Naive thymus-derived CD4-positive, alpha-beta T cell (primary cell): ENCODE measurements at regions of chr11 and their contacts with region 1.

Region 1: DNA sequence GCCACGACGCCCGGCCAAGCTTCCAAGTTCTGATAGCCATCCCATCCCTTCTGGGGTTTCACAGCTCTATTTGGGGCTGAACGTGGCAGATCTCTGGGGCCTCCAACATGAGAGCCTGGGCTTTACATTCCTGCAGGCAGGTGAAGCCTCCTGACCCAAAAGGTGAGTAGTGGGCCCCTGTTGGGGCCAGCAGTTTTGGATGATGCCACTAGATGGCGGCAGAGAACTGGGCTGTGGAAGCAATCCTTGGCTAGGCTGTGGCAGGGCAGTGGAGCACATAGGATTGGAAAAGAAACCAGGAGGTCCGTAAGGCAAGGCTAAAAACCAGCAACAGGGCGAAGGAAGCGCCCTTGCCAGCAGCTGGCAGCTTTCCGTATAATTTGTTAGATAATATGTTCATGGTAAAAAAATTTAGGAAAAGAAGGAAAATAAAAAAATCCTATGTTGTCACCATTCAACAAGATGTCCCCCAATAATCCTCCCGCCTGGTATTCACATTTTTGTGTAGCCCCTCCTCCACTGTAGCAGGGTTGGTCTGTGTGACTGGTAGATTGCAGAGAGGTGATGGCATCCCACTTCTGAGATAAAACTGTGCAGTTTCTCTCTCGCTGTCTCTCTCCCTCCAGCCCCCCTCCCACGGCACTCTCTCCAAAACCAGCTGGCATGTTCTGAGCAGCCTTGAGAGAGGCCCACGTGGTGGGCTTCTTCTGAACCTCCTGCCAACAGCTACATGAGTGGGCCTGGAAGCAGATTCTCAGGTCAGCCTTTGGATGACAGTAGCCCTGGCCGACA is 43.6 kb upstream of the OR4B1 start:
- DNase-seq: peak; percentile 27 to 68 (median 49)
- ATAC-seq: peak; percentile 80
- H3K4me3 ChIP-seq: no peak overlapping the region
- H3K4me3 Mint-ChIP-seq: peak overlapping the region in 1 of 10 donors; percentile 35
- H3K27ac ChIP-seq: no peak overlapping the region
- H3K27ac Mint-ChIP-seq: peak overlapping the region in 4 of 9 donors; percentile 26 to 63 (median 46)
- H3K4me1 ChIP-seq: peaks cover 0 to 4% of the 10 kb centered on the region in 2 donors
- H3K4me1 Mint-ChIP-seq: peaks cover 23 to 43% (median 35%) of the 10 kb centered on the region in 7 donors
- H3K27me3 ChIP-seq: no peaks in the 10 kb centered on the region
- H3K27me3 Mint-ChIP-seq: no peaks in the 10 kb centered on the region

Region 2: DNA sequence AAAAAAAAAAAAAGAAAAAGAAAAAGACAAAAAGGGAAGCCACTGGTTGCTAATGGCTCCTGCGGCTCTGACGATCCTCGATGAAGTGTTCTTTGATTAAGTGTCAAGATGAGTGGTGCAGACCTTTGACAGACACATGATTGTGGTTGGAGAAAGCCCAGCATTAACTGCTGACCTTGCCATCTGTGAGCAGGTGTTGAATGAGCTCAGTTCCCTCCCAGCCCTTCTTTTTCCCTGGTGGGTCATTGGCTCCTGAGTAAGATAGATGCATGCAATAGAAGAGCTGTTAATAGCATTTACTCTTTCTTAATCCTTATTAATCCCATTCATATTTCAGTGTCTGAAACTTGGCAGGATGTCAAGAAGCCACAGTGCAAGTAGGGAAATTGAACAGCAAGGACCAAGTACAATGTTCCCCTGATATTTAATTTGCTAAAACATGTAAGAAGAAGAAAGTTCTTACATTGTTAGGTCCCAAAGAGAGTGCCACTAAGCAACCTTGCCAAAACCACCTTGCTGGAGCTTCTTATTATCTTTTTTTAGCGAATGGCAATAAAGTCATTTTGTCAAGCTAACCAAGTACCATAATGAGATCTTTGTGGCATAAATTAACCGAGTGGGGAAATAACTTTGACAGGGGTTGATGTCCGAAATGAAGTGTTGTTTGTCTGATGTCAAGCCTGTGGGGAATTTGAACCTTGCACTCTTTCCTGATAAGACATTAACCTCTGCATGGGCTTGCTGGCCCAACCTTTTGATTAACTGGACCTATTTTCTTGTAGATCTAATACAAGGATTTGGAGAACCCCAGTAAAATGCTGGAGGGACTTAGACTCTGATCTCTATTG is 79.0 kb before region 1 on chr11:
- CTCF ChIA-PET with region 1: no interaction called
- POLR2A ChIA-PET with region 1: no interaction called
- intact Hi-C with region 1: no loop called
- DNase-seq: no peak
- ATAC-seq: no peak
- H3K4me3 ChIP-seq: no peak overlapping the region
- H3K4me3 Mint-ChIP-seq: no peak overlapping the region
- H3K27ac ChIP-seq: no peak overlapping the region
- H3K27ac Mint-ChIP-seq: peak overlapping the region in 4 of 9 donors; percentile 6 to 40 (median 34)
- H3K4me1 ChIP-seq: peaks cover 11 to 20% of the 10 kb centered on the region in 2 donors
- H3K4me1 Mint-ChIP-seq: peaks cover 30 to 78% (median 67%) of the 10 kb centered on the region in 7 donors
- H3K27me3 ChIP-seq: no peaks in the 10 kb centered on the region
- H3K27me3 Mint-ChIP-seq: no peaks in the 10 kb centered on the region

Region 3: DNA sequence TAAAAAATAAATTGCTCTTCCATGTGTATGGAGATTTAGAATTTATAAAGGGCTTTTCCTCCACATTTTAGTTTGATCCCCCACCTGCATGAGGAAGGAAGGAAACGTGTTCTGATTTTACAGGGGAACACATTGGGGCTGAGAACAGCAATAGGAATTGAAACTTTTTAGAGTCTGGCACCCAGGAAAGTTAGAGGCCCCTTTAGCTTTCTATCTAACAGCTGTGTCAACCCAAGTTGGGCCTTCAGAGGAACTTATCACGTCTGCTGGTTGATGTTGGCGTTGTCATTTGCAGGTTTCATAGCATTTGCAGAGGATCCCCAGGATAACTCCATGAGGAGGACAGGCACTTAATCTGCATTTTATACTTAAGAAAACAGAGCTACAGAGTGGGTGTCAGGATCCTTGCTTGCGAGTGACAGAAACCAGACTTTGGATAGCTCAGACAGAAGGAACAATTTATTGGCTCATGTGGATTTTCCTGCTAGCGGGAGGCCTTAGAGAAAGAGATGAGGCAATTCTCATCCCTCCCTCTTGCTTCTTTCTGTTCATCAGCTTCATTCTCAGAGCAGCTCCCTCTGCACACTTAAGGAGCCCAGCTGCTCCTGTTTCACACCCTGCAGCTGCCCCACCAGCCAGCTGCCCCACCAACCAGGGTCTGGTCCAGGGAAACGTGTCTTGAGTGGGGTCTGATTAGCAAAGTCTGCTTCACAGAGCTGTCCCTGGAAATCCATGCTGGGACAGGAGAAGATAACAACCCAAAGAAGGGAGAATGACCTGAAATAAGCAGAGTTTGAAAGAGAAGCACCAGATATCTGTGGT is 48.9 kb before region 1 on chr11:
- CTCF ChIA-PET with region 1: no interaction called
- POLR2A ChIA-PET with region 1: no interaction called
- intact Hi-C with region 1: no loop called
- DNase-seq: no peak
- ATAC-seq: no peak
- H3K4me3 ChIP-seq: no peak overlapping the region
- H3K4me3 Mint-ChIP-seq: no peak overlapping the region
- H3K27ac ChIP-seq: no peak overlapping the region
- H3K27ac Mint-ChIP-seq: peak overlapping the region in 2 of 9 donors; percentile 9 to 59
- H3K4me1 ChIP-seq: no peaks in the 10 kb centered on the region
- H3K4me1 Mint-ChIP-seq: peaks cover 0 to 21% (median 0%) of the 10 kb centered on the region in 7 donors
- H3K27me3 ChIP-seq: no peaks in the 10 kb centered on the region
- H3K27me3 Mint-ChIP-seq: no peaks in the 10 kb centered on the region

Region 4: GRCh38 chr11:48141475-48142122 is 31.4 kb before region 1 on chr11:
- CTCF ChIA-PET with region 1: no interaction called
- POLR2A ChIA-PET with region 1: no interaction called
- intact Hi-C with region 1: no loop called
- DNase-seq: peak in 2 of 9 donors; percentile 12 to 18
- ATAC-seq: peak; percentile 47
- H3K4me3 ChIP-seq: no peak overlapping the region
- H3K4me3 Mint-ChIP-seq: no peak overlapping the region
- H3K27ac ChIP-seq: no peak overlapping the region
- H3K27ac Mint-ChIP-seq: peak overlapping the region in 7 of 9 donors; percentile 35 to 72 (median 43)
- H3K4me1 ChIP-seq: no peaks in the 10 kb centered on the region
- H3K4me1 Mint-ChIP-seq: peaks cover 6 to 18% (median 10%) of the 10 kb centered on the region in 7 donors
- H3K27me3 ChIP-seq: no peaks in the 10 kb centered on the region
- H3K27me3 Mint-ChIP-seq: no peaks in the 10 kb centered on the region

Region 5: DNA sequence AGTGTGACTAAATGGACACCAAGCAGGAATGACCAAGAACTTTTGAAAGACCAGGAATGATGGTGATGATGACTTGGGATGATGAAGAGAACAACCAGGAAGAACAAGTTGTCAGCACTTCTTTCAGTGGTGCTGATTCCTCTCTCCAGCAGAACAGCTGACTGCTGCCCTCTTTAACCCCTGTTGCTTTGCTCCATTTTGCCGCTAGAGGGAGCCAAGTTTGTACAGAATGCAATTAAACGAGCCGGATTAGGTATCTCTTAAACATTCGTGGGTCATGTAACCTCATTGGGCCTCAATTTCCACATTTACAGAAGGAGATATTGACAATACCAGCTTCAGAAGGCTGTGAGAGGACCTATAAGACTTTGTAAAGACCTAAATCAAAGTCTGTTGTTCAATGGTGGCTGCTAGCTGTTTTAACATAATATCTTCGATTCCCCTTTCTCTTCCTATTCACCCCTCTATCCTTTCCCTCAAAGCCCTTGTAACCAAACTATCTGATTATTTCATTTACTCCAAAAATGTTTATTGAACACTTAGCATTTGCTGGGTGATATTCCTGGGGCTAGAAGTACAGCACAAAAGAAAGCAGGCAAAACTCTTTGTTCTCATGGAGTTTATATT is 134.9 kb after region 1 on chr11:
- CTCF ChIA-PET with region 1: interaction called, 3 read pairs
- POLR2A ChIA-PET with region 1: no interaction called
- intact Hi-C with region 1: loop called (anchors 1 to 2 kb)
- DNase-seq: peak in 8 of 9 donors; percentile 11 to 62 (median 52)
- ATAC-seq: peak; percentile 62
- H3K4me3 ChIP-seq: no peak overlapping the region
- H3K4me3 Mint-ChIP-seq: no peak overlapping the region
- H3K27ac ChIP-seq: no peak overlapping the region
- H3K27ac Mint-ChIP-seq: no peak overlapping the region
- H3K4me1 ChIP-seq: no peaks in the 10 kb centered on the region
- H3K4me1 Mint-ChIP-seq: peaks cover 0 to 9% (median 0%) of the 10 kb centered on the region in 7 donors
- H3K27me3 ChIP-seq: no peaks in the 10 kb centered on the region
- H3K27me3 Mint-ChIP-seq: peaks cover 2 to 22% (median 10%) of the 10 kb centered on the region in 5 donors

Region 6: DNA sequence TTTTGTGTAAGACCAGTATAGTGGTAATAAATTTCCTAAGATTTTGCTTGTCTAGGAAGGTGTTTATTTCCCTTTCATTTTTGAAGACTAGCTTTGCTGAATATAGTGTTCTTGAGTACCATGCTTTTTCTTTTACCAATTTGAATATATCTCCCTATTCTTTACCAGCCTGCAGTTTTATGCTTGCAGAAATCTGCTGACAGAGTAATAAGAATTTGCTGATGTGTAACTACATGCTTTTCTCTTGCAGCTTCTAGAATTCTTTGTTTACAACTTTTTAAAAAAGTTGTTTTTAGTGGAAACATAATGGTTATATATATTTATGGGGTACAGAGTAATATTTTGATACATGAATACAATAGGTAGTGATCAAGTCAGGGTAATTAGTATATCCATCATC is 1360.2 kb after region 1 on chr11:
- CTCF ChIA-PET with region 1: no interaction called
- POLR2A ChIA-PET with region 1: no interaction called
- intact Hi-C with region 1: loop called (anchors 5 kb)
- DNase-seq: no peak
- ATAC-seq: no peak
- H3K4me3 ChIP-seq: no peak overlapping the region
- H3K4me3 Mint-ChIP-seq: no peak overlapping the region
- H3K27ac ChIP-seq: no peak overlapping the region
- H3K27ac Mint-ChIP-seq: no peak overlapping the region
- H3K4me1 ChIP-seq: no peaks in the 10 kb centered on the region
- H3K4me1 Mint-ChIP-seq: no peaks in the 10 kb centered on the region
- H3K27me3 ChIP-seq: no peaks in the 10 kb centered on the region
- H3K27me3 Mint-ChIP-seq: no peaks in the 10 kb centered on the region

Region 7: GRCh38 chr11:49995565-49995964 is 1822.6 kb after region 1 on chr11:
- CTCF ChIA-PET with region 1: no interaction called
- POLR2A ChIA-PET with region 1: no interaction called
- intact Hi-C with region 1: loop called in 1 of 2 experiments (anchors 10 kb)
- DNase-seq: peak in 3 of 9 donors; percentile 0 to 1 (median 1)
- ATAC-seq: no peak
- H3K4me3 ChIP-seq: no peak overlapping the region
- H3K4me3 Mint-ChIP-seq: no peak overlapping the region
- H3K27ac ChIP-seq: no peak overlapping the region
- H3K27ac Mint-ChIP-seq: no peak overlapping the region
- H3K4me1 ChIP-seq: no peaks in the 10 kb centered on the region
- H3K4me1 Mint-ChIP-seq: no peaks in the 10 kb centered on the region
- H3K27me3 ChIP-seq: no peaks in the 10 kb centered on the region
- H3K27me3 Mint-ChIP-seq: no peaks in the 10 kb centered on the region